ENCODE measurements at regions of chr2 and their contacts with region 1.

Region 1: DNA sequence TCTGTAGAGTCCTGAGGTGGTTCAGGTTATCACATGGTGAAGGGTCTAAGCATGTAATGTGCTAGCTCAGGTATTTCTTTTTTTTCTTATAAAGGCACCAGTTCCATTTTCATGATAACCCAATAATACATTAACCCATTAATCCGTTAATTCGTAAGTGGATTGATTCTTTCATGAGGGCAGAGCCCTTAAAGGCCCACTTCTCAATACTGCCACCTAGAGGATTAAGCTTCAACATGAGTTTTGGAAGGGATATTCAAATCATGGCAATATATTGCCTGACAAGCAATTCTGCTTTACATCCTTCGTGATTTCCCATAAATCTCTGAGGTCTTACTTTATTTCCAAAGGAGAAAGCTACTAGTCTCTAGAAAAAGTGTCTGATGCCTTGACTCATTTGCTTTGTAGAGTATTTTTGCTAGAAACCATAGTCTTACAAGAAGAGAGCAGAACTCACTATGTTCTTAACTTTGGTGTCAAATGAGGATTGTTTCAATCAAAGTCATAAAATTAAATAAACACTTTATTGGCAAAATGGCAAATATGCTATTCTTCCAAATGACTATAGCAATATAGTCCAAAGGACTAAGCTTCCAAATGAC is 271.3 kb downstream of the KCNS3 start:
- DNase-seq: no peak
- H3K4me3 ChIP-seq: no peak overlapping the region
- CTCF ChIP-seq: peak; percentile 58

Region 2: DNA sequence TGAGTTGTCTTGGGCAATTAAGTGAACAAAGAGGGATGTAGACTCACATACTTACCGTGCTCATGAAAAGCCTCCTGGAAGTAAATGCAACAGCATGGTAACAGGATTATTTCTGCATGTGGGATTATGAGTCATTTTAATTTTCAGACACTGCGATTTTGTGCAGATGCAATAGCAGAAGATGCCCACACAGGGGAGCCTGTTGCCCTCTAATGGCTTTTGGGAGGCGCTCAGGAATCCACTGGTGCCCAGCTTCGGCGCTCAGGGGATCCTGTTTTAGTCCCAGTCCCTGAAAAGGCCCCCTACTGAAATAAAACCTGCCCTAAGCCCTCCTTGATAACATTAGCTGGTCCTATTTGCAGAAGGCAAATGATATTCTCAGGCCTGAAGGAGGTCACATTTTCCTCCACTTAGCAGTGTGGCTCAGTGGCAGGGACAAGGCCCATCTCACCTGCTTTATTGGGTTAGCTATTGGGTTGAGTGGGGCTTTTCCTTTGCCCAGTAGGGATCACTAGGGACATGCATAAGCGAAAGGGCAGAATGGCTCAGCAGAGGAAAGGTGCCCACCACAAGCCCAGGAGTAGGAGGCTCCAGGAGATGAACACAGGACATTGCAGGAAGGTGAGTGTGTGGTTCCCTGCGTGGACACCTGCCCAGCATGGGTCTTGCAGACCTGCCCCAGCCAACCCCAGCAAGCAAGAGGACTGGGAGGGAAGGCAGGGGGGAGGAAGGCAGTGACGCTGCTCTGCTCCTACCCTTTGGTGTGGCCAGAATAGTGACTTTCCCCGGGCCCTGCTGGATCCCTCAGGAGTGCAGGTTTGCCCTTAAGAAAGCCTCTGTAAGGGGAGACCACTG is 297.8 kb before region 1 on chr2:
- CTCF ChIA-PET with region 1: interaction called, 76 read pairs
- POLR2A ChIA-PET with region 1: interaction called, 3 read pairs
- DNase-seq: peak; percentile 10
- H3K4me3 ChIP-seq: no peak overlapping the region
- CTCF ChIP-seq: peak; percentile 81

Region 3: GRCh38 chr2:17879101-17879912 is 270.4 kb before region 1 on chr2:
- CTCF ChIA-PET with region 1: interaction called, 11 read pairs
- POLR2A ChIA-PET with region 1: no interaction called
- DNase-seq: no peak
- H3K4me3 ChIP-seq: peak overlapping the region; percentile 54
- CTCF ChIP-seq: peak; percentile 25

Region 4: DNA sequence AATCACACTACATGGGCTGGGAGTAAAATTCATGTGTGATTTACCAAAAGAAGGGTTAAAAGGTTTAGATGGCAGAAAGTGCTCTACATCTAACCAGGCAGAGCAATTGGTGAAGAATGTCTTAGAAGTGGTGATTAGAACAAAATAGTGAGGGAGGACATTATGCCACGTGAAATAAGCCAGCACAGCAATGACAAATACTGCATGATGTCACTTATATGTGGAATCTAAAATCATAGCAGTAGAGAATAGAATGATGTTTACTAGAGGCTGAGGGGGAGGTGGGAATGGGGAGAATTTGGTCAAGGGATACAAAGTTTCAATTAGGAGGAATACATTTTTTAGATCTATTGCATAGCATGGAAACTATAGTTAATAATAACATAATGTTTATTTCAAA is 18.0 kb before region 1 on chr2:
- CTCF ChIA-PET with region 1: interaction called, 61 read pairs
- POLR2A ChIA-PET with region 1: no interaction called
- DNase-seq: no peak
- H3K4me3 ChIP-seq: no peak overlapping the region
- CTCF ChIP-seq: no peak

Region 5: GRCh38 chr2:18159896-18160295 is 10.2 kb after region 1 on chr2:
- CTCF ChIA-PET with region 1: interaction called, 51 read pairs
- POLR2A ChIA-PET with region 1: no interaction called
- DNase-seq: no peak
- H3K4me3 ChIP-seq: no peak overlapping the region
- CTCF ChIP-seq: no peak

Region 6: GRCh38 chr2:18178736-18179349 is 29.1 kb after region 1 on chr2:
- CTCF ChIA-PET with region 1: interaction called, 11 read pairs
- POLR2A ChIA-PET with region 1: no interaction called
- DNase-seq: no peak
- H3K4me3 ChIP-seq: no peak overlapping the region
- CTCF ChIP-seq: peak; percentile 66

Region 7: GRCh38 chr2:18244845-18245244 is 95.1 kb after region 1 on chr2:
- CTCF ChIA-PET with region 1: no interaction called
- POLR2A ChIA-PET with region 1: no interaction called
- DNase-seq: no peak
- H3K4me3 ChIP-seq: no peak overlapping the region
- CTCF ChIP-seq: no peak

Region 8: DNA sequence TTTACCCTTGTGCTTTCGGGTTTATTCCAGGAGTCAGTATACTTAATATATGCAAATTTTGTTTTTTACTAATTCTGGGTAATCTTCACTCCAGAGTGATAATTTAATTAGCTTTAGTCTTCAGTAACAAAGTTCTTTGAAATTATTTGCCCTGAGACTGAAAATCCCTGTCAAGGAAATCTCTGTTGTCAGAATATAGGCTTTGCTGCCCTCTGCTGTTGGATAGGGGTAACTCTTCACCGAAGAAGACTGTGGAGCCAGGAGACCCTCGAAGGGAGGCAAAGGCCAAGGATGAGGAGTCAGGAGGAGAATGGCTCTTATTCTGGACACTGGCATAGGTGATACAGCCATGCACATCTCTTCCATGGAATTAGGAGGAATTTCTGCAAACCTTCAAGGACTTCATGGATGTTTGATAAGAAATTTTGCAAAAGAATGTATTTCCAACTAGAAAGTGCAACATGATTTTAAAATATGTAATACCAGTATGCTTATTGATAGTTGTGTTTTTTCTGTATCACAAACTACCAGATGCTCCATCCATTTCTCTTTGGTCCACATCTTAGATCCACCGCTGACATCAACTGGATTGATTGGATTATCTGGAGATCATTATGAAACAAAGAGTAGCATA is 228.4 kb after region 1 on chr2:
- CTCF ChIA-PET with region 1: interaction called, 55 read pairs
- POLR2A ChIA-PET with region 1: no interaction called
- DNase-seq: no peak
- H3K4me3 ChIP-seq: no peak overlapping the region
- CTCF ChIP-seq: peak; percentile 72

Region 9: DNA sequence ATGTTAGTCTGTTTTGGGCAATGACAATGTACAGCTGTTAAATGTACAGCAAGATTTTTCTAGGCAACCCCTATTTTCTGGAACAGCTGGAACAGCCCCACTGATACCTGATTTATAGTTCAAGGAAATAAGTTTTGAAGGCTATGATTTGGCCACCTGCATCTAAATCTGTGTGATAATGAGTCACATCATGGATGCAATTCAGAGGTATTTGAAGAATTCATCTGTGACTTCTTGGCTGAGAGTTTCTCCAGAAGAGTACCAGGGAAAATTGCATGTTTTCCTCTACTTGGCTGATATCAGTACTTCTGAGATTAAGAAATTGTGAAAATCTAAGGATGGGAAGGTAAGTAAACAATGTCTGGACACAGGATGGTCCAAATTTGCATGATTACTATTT is 480.4 kb after region 1 on chr2:
- CTCF ChIA-PET with region 1: no interaction called
- POLR2A ChIA-PET with region 1: no interaction called
- DNase-seq: no peak
- H3K4me3 ChIP-seq: no peak overlapping the region
- CTCF ChIP-seq: no peak

Measured in AG04449 (cell line).